Dendritic cell treated with granulocyte-macrophage colony-stimulating factor and Interleukin-4, amounts not matched to agents 40 ng/mL and 50 ng/mL, for 4 days (primary cell): ENCODE measurements at regions of chr10 and their contacts with region 1.

Region 1: DNA sequence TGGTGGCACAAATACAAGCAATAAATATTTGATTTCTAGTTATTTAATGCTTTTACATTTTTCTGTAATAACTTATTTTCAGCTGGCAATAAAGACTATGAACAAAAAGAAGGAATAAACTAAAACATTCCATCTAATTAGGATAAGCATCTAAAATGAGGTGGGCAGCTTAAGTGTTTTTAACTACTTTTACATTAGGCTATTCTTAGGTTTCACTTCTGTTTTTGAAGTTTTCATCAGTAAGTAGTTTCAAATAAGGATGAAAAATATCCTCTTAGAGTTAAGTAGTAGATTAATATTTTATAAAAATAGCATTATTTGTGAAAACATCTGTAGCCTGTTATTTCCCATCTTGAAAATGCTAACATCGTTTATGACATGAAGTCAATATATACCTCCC is 15.9 kb downstream of the NT5C2 start:
- H3K4me3 Mint-ChIP-seq: no peak overlapping the region
- H3K27ac Mint-ChIP-seq: peak overlapping the region; percentile 37
- H3K4me1 Mint-ChIP-seq: peaks cover 30% of the 10 kb centered on the region
- H3K27me3 Mint-ChIP-seq: no peaks in the 10 kb centered on the region

Region 2: GRCh38 chr10:103192451-103193106 is 15.5 kb after region 1 on chr10:
- intact Hi-C with region 1: loop called (anchors 1 kb)
- H3K4me3 Mint-ChIP-seq: peak overlapping the region; percentile 98
- H3K27ac Mint-ChIP-seq: peak overlapping the region; percentile 100
- H3K4me1 Mint-ChIP-seq: peaks cover 56% of the 10 kb centered on the region
- H3K27me3 Mint-ChIP-seq: no peaks in the 10 kb centered on the region